Left ventricle myocardium superior (tissue), 1 donor: ENCODE measurements at regions of chr2 and their contacts with region 1.

Region 1: DNA sequence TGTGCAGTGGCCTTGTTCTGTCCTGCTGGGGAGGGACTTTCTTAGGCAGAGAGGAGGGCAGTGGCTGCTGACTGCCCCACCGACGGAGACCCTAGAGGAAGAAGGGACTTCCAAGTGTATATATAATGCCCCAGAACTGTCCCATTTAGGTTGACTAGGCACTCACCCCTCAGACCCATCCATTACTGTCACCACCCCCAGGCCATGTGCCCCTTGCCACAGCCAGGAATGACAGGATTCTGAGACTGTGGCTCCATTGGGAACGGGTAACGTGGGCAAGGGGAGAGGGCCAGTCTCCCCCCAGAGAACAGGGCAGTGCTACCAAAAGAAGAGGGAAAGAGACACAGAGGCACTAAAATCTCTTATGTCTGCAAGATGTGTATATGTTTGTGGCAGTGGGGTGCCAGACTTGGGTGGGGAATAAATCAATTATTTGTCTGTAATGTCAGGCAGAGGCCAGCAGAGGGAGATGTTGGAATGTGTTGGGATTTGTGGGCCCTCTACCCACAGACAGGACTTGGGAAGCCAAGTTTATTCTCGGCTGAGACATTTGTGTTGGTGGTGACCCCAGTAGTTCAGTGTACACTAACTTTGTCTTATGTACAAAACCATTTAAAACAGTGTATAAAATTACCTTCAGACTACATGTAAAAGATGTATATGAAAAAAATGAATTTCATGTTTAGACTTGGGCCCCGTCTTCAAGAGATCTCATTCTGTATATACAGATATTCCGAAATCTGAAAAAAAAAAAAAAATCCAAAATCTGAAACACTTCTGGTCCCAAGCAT is 24.0 kb upstream of the TMEM37 start:
- DNase-seq: no peak
- ATAC-seq: peak; percentile 77

Region 2: GRCh38 chr2:119076713-119077112 is 330.9 kb before region 1 on chr2:
- intact Hi-C with region 1: no loop called
- DNase-seq: no peak
- ATAC-seq: no peak

Region 3: DNA sequence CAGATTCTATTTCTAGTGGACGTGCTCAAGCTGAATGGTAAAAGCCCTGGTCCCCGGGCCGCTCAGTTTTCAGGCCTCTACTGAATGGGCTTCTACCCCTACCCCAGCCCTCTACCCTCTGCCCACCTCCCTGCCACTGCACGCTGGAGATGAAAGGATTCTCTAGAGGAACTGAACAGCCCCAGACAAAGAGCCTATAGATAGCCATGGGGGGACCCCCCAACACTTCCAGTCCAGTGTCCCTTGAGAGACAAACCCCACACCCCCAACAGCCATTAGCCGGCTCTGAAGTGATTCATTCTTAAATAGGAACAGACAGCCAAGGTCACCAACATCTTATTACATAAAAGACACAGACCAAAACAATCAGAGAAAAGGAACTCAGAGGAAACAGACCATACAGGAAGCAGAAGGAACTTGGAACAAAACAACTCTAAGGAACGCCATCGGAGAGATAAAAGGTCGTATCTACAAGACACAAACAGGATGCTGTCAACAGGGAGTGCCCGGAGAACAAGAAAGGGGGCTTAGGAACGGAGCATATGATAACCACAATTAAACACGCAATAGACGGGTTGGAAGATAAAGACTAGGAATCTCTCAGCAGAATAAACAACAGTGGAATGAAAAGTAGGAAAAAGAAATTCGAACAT is 47.6 kb after region 1 on chr2:
- intact Hi-C with region 1: no loop called
- DNase-seq: no peak
- ATAC-seq: no peak

Region 4: DNA sequence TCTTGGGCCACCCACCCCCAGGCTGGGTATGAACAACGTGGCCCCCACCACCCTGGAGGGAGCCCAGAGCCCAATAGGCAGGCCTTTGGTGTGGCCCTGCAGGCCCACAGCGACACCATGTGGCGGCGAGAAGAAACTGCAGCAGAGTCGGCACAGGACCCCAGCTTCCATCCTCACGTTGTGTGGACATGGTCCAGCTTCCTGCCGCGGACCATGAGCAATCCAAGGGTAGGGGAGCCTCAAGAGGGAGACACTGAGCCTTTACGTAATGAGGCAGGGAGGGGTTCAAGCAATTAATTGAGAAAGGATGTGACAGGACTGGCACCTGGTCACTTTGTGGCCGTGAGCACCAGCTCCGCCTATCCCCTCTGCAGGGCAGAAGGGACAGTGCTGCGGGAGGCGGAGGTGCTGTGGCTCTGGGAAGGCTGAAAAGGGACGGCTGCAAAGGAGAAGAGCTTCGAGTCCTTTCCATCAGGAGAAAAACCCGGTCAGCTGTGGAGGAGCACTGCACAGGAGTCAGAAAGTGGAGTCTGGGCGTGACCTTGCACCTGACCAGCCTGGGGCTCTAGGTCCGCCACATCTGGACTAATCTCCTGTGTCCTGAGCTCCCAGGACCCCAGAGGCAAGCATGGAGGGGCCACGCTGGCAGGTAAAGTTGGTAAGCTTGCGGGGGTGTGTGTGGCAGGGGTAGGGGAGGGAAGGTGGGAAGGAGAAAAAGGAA is 68.8 kb after region 1 on chr2:
- intact Hi-C with region 1: loop called (anchors 5 kb)
- DNase-seq: peak; percentile 69
- ATAC-seq: peak; percentile 60

Region 5: GRCh38 chr2:119659601-119660342 is 252.1 kb after region 1 on chr2:
- intact Hi-C with region 1: loop called (anchors 10 kb)
- DNase-seq: peak; percentile 37
- ATAC-seq: peak; percentile 44